Activated naive CD4-positive, alpha-beta T cell treated with anti-CD3 and anti-CD28 coated beads for 36 hours (primary cell): ENCODE measurements at regions of chr22 and their contacts with region 1.

Region 1: DNA sequence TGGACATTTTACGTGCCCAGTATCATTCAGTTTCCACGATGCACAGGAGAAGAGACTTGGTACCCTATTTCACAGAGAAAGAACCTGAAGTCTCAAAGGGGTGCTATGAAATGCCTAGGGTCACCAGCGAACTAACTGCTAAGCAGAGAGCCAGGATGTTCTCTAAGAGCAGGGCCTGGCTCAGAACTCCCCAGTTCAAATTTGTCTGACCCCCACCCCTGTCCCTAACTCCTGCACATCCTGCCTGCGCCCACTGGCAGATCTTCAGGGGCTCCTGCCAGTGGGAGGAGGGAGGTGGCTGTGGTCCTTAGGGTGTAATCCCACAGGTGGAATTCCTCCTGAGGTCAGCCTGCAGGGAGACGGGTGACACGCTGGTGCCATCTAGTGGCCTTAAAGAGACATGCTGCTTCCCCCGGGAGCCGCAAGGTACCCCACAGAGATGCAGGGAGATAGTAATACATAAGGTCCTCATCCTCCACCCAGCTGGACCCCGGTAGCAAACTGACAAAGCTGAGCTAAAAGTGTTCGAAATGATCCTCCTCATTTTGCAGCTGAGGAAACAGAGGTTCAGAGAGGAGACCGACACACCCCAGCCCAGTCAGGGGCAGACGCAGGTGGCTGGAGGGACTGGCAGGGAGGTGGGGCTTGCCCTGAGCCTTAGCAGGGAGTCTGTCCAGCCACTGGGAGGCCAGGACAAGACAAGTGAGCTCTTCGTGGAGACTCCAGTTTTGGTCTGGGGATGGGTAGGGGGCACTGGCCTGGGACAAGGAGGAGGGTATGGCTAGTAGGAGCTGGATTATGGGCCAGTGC is 34.1 kb downstream of the MB start:
- DNase-seq: peak; percentile 55
- H3K4me3 Mint-ChIP-seq: no peak overlapping the region
- H3K27ac Mint-ChIP-seq: no peak overlapping the region
- H3K4me1 Mint-ChIP-seq: no peaks in the 10 kb centered on the region
- H3K27me3 Mint-ChIP-seq: no peaks in the 10 kb centered on the region

Region 2: GRCh38 chr22:35128637-35129036 is 454.4 kb before region 1 on chr22:
- CTCF ChIA-PET with region 1: no interaction called
- intact Hi-C with region 1: no loop called
- DNase-seq: no peak
- H3K4me3 Mint-ChIP-seq: no peak overlapping the region
- H3K27ac Mint-ChIP-seq: no peak overlapping the region
- H3K4me1 Mint-ChIP-seq: no peaks in the 10 kb centered on the region
- H3K27me3 Mint-ChIP-seq: peaks cover 28% of the 10 kb centered on the region

Region 3: GRCh38 chr22:35430897-35431322 is 152.2 kb before region 1 on chr22:
- CTCF ChIA-PET with region 1: interaction called, 22 read pairs
- intact Hi-C with region 1: loop called (anchors 5 kb)
- DNase-seq: peak; percentile 71
- H3K4me3 Mint-ChIP-seq: no peak overlapping the region
- H3K27ac Mint-ChIP-seq: no peak overlapping the region
- H3K4me1 Mint-ChIP-seq: no peaks in the 10 kb centered on the region
- H3K27me3 Mint-ChIP-seq: no peaks in the 10 kb centered on the region

Region 4: DNA sequence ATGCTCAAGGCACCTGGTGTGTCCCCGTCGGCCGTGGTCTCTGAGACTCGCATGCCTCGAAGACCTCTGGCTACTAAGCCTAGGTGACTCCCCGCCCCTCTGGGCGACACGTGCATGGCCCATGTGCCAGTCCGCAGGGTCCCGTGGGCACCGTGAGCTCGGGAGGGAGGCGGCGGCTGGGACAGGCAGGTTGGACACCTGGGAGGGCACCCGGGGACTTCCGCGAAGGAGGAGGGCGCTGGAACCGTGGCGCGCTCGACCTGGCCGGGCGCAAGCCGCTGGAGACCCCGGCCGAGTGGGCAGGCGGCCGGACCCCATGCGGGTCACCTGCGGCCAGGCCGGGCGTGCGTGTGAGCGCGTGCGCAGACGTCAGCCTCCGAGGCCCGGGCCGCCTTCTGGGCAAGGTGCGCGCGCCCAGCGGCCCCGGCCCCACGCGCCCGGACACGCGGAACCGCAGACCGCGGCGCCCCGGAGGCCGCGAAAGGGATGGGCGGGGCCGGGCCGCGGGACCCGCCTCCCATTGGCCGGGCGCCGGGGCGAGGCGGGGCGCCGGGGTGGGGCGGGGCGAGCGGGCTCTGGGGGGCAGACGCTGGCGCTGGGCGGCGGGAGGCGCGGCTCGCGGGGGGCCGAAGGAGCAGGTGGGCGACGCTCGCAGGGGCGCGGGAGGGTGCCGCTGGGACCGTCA is 43.0 kb before region 1 on chr22:
- CTCF ChIA-PET with region 1: interaction called, 13 read pairs
- intact Hi-C with region 1: no loop called
- DNase-seq: peak; percentile 41
- H3K4me3 Mint-ChIP-seq: peak overlapping the region; percentile 61
- H3K27ac Mint-ChIP-seq: no peak overlapping the region
- H3K4me1 Mint-ChIP-seq: no peaks in the 10 kb centered on the region
- H3K27me3 Mint-ChIP-seq: peaks cover 25% of the 10 kb centered on the region